Right lobe of liver (tissue), 6 donors: ENCODE measurements at regions of chr19 and their contacts with region 1.

Region 1: DNA sequence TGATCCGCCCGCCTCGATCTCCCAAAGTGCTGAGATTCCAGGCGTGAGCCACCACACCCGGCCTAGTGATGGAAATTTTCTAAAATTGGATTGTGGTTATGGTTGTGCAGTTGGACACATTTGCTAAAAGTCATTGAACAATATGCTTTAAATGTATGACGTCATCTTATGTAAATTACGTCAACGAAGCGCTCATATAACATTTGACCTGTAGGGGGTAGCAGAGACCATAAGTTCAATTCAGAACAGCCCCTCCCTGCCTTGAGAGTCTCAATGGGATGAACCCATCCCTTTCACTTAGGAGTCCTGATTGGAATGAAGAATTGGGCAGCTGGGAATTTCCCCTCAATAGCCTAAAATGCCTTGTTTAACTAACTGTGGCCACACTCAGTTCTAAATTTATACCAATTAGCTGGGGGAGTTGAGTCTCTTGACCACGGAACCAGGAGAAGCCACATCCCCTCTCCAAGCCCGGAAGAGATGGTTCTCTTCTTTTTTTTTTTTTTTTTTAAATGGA is 15.3 kb upstream of the TLE6 start:
- DNase-seq: no peak
- ATAC-seq: peak; percentile 72 to 93 (median 86)
- H3K4me3 ChIP-seq: no peak overlapping the region
- H3K27ac ChIP-seq: no peak overlapping the region
- H3K4me1 ChIP-seq: no peaks in the 10 kb centered on the region
- H3K27me3 ChIP-seq: no peaks in the 10 kb centered on the region
- CTCF ChIP-seq: peak; percentile 73 to 94 (median 76)
- POLR2A ChIP-seq: no peak

Region 2: DNA sequence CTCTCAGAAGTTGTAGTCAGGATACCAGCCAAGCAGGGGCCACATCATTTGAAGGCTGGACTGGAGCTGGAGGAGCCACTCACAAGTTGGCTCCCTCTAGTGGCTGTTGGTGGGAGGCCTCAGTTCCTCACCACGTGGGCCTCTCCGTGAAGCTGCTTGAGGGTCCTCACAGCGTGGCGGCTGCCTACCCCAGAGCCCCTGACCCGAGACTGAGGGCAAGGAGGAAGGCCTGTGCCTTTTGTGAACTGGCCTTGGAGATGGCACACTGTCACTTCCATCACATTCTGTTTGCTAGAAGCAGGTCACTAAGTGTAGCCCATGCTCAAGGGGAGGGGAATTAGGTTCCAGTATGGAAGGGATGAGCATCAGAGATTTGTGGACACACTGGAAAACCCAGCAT is 146.7 kb after region 1 on chr19:
- intact Hi-C with region 1: loop called in 1 of 2 experiments (anchors 10 kb)
- DNase-seq: peak in 1 of 3 donors; percentile 65
- ATAC-seq: peak; percentile 41 to 69 (median 62)
- H3K4me3 ChIP-seq: no peak overlapping the region
- H3K27ac ChIP-seq: no peak overlapping the region
- H3K4me1 ChIP-seq: no peaks in the 10 kb centered on the region
- H3K27me3 ChIP-seq: no peaks in the 10 kb centered on the region
- CTCF ChIP-seq: peak; percentile 68 to 90 (median 86)
- POLR2A ChIP-seq: no peak